OCI-LY7 (cell line): ENCODE measurements at regions of chr2 and their contacts with region 1.

Region 1: GRCh38 chr2:231514103-231514950 is 15.9 kb downstream of the NMUR1 start:
- DNase-seq: peak; percentile 97
- H3K4me3 ChIP-seq: peak overlapping the region; percentile 76
- H3K27ac ChIP-seq: peak overlapping the region; percentile 49
- H3K4me1 ChIP-seq: peaks cover 23% of the 10 kb centered on the region
- CTCF ChIP-seq: no peak

Region 2: GRCh38 chr2:231463698-231464575 is 50.4 kb before region 1 on chr2 and contains the start of gene NCL:
- CTCF ChIA-PET with region 1: no interaction called
- POLR2A ChIA-PET with region 1: interaction called, 7 read pairs
- intact Hi-C with region 1: loop called (anchors 1 kb)
- DNase-seq: peak; percentile 92
- H3K4me3 ChIP-seq: peak within 1 kb of the TSS; percentile 94
- H3K27ac ChIP-seq: peak within 1 kb of the TSS; percentile 88
- H3K4me1 ChIP-seq: peaks cover 28% of the 10 kb centered on the region
- CTCF ChIP-seq: no peak
- total RNA-seq, gene NCL: 255 and 413 TPM in 2 replicates

Region 3: GRCh38 chr2:231557571-231558237 is 43.4 kb after region 1 on chr2:
- CTCF ChIA-PET with region 1: no interaction called
- POLR2A ChIA-PET with region 1: no interaction called
- intact Hi-C with region 1: loop called (anchors 1 kb)
- DNase-seq: peak; percentile 88
- H3K4me3 ChIP-seq: no peak overlapping the region
- H3K27ac ChIP-seq: no peak overlapping the region
- H3K4me1 ChIP-seq: peaks cover 4% of the 10 kb centered on the region
- CTCF ChIP-seq: peak; percentile 91

Region 4: DNA sequence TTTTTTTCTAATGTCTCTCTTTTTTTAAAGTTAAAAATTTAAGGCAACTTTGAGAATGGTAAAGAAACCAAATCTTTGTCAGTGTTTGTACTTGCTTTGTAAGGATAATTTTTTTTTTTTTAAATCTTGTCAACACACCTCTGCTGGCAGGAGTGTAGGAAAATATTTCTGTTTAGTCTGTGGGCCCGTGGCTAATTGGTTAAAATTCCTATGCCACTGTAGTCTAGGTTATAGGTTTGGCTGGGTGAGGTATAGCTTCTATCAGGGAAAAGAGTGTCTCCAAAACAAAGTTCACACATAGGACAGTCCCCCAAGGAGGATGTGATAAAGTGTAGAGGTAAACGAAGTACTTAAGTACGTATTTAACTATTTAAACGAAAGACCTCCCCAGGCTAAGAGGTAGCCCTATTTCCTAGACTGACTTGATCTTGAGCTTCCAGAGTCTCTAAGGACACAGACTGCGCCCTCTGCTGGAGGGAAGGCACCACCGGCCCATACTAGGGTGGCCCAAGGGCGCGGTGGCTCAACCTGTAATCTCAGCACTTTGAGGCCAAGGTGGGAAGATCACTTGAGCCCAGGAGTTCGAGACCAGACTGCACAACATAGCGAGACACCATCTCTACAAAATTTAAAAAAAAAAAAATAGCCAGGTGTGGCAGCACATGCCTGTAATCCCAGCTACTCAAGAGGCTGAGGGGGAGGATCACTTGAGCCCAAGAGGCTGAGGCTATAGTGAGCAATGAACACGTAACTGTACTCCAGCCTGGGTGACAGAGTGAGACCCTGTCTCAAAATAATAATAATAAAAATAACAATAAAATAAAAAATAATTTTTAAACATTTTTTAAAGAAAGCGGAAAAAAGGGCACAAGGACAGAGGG is 87.3 kb after region 1 on chr2:
- CTCF ChIA-PET with region 1: interaction called, 4 read pairs
- POLR2A ChIA-PET with region 1: interaction called, 3 read pairs
- intact Hi-C with region 1: loop called (anchors 1 kb)
- DNase-seq: peak; percentile 89
- H3K4me3 ChIP-seq: no peak overlapping the region
- H3K27ac ChIP-seq: no peak overlapping the region
- H3K4me1 ChIP-seq: peaks cover 44% of the 10 kb centered on the region
- CTCF ChIP-seq: peak; percentile 95

Region 5: DNA sequence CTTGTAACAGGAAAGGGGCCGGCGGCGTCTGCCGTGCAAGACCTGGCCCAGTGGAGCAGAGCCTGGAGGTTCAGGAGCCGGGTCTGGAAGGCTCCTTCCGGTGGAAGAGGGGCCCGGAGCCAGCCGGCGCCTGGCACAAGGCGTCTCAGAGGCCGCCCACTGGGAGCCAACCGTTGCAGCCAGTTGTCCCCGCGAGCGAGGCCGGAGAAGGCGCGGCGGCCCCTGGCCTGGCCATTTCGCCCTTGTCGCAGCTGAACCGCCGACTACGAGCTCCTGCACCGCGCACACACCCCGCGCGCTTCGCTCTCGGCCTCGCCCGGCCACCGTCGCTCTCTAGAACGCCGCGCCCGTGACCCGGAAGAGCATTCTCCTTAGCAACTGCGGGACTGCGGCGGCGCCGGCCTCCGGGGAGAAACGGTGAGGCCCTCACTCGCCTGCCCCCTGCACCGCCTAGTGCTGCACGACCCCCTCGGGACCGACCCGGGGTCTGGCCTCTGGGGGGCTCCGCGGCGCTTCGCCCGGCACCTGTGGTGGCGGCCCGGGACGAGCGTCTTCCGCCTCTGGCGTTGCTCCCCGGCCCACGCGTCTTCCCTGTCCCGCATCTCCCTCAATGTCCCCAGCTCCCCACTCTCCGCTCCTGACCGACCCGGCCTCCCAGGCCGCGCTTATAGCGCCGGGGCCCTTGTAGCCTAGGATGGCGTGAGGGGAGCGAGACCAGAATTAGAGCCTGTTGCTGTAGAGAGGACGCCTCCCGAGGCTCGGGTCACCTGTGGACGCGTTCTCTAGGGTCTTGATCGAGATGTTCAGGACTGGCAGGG is 447.2 kb after region 1 on chr2 and contains the start of gene DIS3L2:
- CTCF ChIA-PET with region 1: no interaction called
- POLR2A ChIA-PET with region 1: no interaction called
- intact Hi-C with region 1: no loop called
- DNase-seq: peak; percentile 86
- H3K4me3 ChIP-seq: peak within 1 kb of the TSS; percentile 74
- H3K27ac ChIP-seq: peak within 1 kb of the TSS; percentile 44
- H3K4me1 ChIP-seq: peaks cover 18% of the 10 kb centered on the region
- CTCF ChIP-seq: peak; percentile 28; the same call in 1 of the 2 replicates
- total RNA-seq, gene DIS3L2: 20.6 and 20.7 TPM in 2 replicates

Region 6: DNA sequence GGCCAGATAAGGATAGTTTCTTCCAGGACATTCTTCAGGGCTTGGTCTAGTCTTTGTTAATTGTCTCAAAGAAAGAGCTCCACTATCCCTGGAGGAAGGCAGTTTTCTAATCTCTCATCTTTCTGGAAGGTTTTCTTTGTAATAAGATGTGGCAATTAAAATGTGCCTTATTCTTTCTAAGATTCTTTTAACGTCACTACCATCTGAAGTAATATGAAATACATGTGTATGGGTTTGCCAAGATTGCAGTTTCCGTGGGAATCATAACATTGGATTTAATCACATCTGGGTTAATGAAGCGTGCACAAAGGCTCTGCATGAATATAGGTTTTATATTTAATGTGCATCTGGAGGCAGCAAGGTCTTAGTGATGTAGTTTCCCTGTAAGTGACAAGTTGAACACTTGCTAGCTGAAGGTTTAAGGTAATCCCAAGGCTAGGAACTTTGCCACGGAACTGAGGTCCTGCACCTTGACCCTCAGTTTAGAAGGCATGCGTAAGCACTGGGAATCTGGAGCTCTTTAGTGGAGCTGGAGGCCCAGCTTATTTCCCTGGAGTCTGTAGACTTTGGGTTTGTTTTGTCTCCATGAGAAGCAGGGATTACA is 472.9 kb after region 1 on chr2:
- CTCF ChIA-PET with region 1: no interaction called
- POLR2A ChIA-PET with region 1: no interaction called
- intact Hi-C with region 1: no loop called
- DNase-seq: no peak
- H3K4me3 ChIP-seq: no peak overlapping the region
- H3K27ac ChIP-seq: no peak overlapping the region
- H3K4me1 ChIP-seq: no peaks in the 10 kb centered on the region
- CTCF ChIP-seq: no peak